A549 (cell line): ENCODE measurements at regions of chr1 and their contacts with region 1.

Region 1: DNA sequence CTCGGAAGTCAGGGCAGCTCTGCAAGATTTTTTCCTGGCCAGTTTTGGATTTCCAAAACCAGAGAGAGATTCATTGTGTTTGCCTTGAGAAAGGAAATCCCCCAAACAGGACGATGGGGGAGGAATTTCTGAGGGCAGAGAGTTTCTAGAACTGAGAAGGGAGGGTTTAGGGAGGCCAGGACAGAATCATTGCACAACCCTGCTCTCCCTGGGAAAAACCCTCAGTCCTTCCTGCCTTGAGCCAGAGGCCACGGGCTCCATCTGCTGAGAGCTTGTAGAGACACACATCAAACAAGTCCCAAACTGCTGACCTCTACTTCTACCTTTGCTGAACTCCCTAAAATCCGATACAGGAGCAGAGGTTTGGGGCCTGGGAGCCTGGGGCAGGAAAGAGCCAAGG is 99.7 kb downstream of the NMNAT2 start:
- DNase-seq: peak; percentile 48 to 77
- ATAC-seq: peak; percentile 97 to 99
- H3K4me3 ChIP-seq: no peak overlapping the region
- H3K27ac ChIP-seq: peak overlapping the region in 1 of 2 experiments; percentile 44; a peak in 2 of 6 replicates
- H3K4me1 ChIP-seq: peaks cover 9% of the 10 kb centered on the region; the same call in 2 of the 3 replicates
- CTCF ChIP-seq: peak; percentile 49
- EP300 ChIP-seq: no peak
- POLR2A ChIP-seq: no peak
- RAD21 ChIP-seq: peak; percentile 72 to 78

Region 2: DNA sequence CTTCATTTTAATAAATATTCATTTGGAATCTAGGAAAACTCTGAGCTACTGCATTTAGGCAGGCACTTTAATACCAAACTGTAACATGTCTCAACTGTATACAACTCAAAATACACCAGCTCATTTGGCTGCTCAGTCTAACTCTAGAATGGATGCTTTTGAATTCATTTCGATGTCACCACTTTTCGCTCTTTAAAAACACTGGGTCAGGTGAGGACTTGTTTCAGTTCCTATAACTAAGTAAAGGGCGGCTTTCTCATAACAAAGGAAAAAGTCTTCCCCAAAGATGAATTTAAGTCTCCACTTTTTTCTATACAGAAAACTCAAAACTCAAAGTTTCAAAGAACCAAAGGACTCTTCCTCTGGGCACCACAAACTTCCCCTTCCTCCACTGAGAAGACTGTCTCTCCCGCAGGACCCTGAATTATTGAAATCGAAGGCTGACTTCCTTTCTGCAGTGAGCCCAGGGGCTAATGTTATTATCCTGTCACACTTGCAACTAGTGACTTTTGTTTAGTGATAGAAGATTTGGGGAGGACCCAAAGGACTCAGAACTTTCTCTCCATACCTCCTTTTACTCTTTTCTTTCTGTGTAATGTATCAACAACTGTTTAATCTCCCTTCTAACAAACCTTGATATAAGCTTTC is 489.0 kb before region 1 on chr1:
- CTCF ChIA-PET with region 1: no interaction called
- POLR2A ChIA-PET with region 1: no interaction called
- DNase-seq: no peak
- ATAC-seq: no peak
- H3K4me3 ChIP-seq: no peak overlapping the region
- H3K27ac ChIP-seq: no peak overlapping the region
- H3K4me1 ChIP-seq: no peaks in the 10 kb centered on the region
- CTCF ChIP-seq: no peak
- EP300 ChIP-seq: no peak
- POLR2A ChIP-seq: no peak
- RAD21 ChIP-seq: no peak

Region 3: GRCh38 chr1:183306317-183307042 is 12.0 kb before region 1 on chr1:
- CTCF ChIA-PET with region 1: interaction called, 20 read pairs
- POLR2A ChIA-PET with region 1: no interaction called
- DNase-seq: peak; percentile 29 to 33
- ATAC-seq: peak in 1 of 2 experiments; percentile 72; a peak in 3 of 6 replicates
- H3K4me3 ChIP-seq: no peak overlapping the region
- H3K27ac ChIP-seq: no peak overlapping the region
- H3K4me1 ChIP-seq: no peaks in the 10 kb centered on the region
- CTCF ChIP-seq: peak; percentile 32; the same call in 2 of the 3 replicates
- EP300 ChIP-seq: no peak
- POLR2A ChIP-seq: no peak
- RAD21 ChIP-seq: no peak